SK-N-SH (cell line): ENCODE measurements at regions of chr6 and their contacts with region 1.

Region 1: DNA sequence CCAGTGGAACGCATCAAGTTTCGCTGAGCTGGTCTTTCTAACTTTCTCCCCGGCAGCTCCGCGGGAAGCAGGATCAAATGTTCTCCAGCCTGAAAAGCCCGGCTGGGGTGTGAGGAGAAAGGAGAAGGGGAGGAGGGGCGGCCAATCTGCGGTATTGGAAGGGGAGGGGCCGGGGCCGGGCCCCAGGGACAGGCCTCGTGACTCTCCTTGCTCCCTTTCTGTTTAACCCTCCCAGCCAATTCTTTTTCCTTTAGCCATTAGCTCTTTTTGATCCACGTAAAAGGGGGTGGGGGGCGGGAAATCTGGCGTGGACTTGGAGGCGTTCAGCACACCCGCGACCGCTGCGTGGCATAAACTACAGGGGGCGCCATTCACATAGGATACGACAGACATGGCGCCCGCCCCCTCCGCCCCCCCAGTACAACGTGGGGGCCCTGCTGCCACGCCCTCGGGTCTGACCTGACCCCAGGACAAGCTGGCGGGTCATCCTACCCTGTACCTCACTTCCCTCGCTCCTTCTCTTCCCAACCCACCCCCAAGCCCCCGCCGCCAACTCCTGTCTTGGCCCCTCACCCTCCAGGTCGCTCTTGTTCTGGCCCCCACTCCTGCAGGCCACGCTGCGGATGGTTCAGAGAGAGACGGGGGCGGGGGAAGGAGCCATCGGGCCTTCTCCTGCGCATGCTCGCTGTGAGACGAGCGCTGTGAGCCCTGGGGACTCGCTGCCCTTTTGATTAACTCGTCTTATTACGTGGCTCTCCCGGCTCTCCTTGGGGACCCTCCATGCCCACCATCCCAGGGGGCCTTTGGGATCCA is 7.8 kb upstream of the MDGA1 start:
- DNase-seq: peak; percentile 86
- H3K4me3 ChIP-seq: peak overlapping the region in 1 of 2 experiments; percentile 26; a peak in 2 of 4 replicates
- H3K27ac ChIP-seq: peak overlapping the region in 1 of 2 experiments; percentile 74; a peak in 2 of 4 replicates
- H3K4me1 ChIP-seq: peaks cover 0 to 9% of the 10 kb centered on the region in 2 experiments; a peak in 1 of 4 replicates
- H3K27me3 ChIP-seq: no peaks in the 10 kb centered on the region
- CTCF ChIP-seq: peak; percentile 51
- EP300 ChIP-seq: no peak
- RAD21 ChIP-seq: peak; percentile 54

Region 2: GRCh38 chr6:37365762-37366161 is 339.7 kb before region 1 on chr6:
- CTCF ChIA-PET with region 1: no interaction called
- POLR2A ChIA-PET with region 1: no interaction called
- DNase-seq: peak; percentile 37
- H3K4me3 ChIP-seq: no peak overlapping the region
- H3K27ac ChIP-seq: no peak overlapping the region
- H3K4me1 ChIP-seq: peaks cover 0 to 8% of the 10 kb centered on the region in 2 experiments; a peak in 2 of 4 replicates
- H3K27me3 ChIP-seq: no peaks in the 10 kb centered on the region
- CTCF ChIP-seq: peak; percentile 43
- EP300 ChIP-seq: no peak
- RAD21 ChIP-seq: peak; percentile 67

Region 3: DNA sequence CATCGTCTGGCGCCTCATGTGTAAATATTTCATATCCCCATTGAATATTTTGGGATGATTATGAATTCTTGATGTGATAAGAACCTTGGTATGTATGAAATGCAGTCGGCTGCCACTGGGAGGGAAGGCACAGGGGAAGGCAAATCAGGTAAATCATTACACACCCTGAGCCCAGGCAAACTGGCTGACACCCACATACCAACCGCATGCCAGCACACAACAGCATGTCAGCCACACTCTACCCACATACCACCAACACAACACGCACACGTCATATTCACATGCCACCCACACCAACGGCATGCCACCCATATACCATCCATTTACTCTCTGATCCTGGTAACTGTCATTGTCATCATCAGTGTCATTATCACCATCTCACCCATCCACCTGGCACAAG is 20.5 kb after region 1 on chr6:
- CTCF ChIA-PET with region 1: interaction called, 17 read pairs
- POLR2A ChIA-PET with region 1: no interaction called
- DNase-seq: no peak
- H3K4me3 ChIP-seq: no peak overlapping the region
- H3K27ac ChIP-seq: peak overlapping the region in 1 of 2 experiments; percentile 85; a peak in 1 of 4 replicates
- H3K4me1 ChIP-seq: peaks cover 0 to 15% of the 10 kb centered on the region in 2 experiments; a peak in 1 of 4 replicates
- H3K27me3 ChIP-seq: no peaks in the 10 kb centered on the region
- CTCF ChIP-seq: no peak
- EP300 ChIP-seq: no peak
- RAD21 ChIP-seq: no peak